ENCODE measurements at regions of chr1 and their contacts with region 1.

Region 1: DNA sequence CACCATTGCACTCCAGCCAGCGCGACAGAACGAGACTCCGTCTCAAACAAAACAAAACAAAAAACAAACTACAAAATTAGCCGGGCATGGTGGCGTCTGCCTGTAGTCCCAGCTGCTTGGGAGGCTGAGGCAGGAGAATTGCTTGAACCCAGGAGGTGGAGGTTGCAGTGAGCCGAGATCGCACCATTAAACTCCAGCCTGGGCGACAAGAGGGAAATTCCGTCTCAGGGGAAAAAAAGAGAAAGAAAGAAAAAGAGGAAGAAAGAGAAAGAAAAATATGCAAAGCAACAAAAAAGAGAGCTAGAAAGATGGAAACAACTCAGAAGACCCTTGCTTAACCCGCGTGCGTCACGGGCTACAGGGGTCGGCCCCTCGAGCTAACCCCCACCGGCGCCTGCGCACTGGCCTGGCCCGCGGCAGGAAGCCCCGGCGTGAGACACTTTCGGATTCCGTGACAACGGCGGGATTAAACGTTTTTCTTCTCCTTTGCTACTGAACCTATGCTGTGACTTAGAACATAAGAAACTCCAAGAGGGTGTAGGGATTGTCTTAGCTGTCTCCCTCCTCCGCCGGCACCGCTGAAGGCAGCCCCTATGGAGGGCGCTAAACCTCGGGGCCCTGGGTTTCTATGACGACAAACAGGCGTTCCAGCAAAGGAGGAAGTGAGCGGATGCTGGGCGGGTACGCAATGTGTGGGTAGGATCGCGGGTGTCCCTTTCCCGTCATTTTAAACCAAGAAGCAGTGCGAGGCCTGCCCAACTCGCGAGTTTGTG is at the start of gene AXDND1:
- DNase-seq: peak; percentile 76 to 86
- H3K4me3 ChIP-seq: peak within 1 kb of the TSS; percentile 63
- H3K4me1 ChIP-seq: peaks cover 14% of the 10 kb centered on the region
- H3K27me3 ChIP-seq: no peaks in the 10 kb centered on the region

Region 2: DNA sequence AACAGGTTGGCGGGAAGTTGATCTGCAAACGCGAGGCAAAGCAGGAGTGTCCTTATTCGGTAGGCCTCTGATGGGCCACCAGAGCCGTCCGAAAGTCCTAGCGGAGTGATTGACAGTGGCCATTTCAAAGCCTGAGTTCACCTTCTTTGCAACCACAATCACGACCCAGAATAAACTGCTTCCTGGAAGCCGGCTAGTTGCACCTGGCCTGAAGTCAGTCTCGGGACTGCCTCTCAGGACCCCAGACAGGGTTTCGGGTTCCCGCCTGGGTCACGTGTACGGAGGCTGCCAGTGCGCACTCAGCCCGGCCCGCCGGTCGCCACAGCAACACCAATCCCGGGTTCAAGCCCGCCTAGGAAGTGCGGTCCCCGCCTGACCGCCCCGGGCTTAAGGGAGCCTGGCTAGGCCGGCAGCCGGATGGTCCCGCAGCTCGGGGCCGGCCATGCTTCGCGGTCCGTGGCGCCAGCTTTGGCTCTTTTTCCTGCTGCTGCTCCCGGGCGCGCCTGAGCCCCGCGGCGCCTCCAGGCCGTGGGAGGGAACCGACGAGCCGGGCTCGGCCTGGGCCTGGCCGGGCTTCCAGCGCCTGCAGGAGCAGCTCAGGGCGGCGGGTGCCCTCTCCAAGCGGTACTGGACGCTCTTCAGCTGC is 283.7 kb before region 1 on chr1 and contains the start of gene TOR3A:
- in situ Hi-C with region 1: loop called (anchors 5 kb)
- DNase-seq: peak; percentile 79 to 94
- H3K4me3 ChIP-seq: peak within 1 kb of the TSS; percentile 73
- H3K4me1 ChIP-seq: peaks cover 12% of the 10 kb centered on the region
- H3K27me3 ChIP-seq: no peaks in the 10 kb centered on the region

Region 3: DNA sequence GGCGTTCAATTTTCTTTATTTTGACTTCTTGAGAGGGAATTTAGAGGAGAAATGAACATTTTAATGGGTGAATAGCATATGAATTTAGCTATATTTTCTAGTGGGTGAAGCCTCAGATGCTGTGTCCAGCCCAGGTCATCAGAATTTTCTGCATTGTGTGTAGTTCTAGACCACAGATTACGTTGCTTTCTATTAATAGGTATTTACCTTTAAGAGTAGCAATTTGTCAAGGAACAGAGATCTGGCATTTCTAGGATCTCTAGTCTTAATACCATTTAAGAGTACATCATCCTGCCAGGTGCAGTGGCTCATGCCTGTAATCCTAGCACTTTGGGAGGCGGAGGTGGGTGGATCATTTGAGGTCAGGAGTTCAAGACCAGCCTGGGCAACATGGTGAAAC is 246.9 kb after region 1 on chr1:
- in situ Hi-C with region 1: no loop called
- DNase-seq: no peak
- H3K4me3 ChIP-seq: no peak overlapping the region
- H3K4me1 ChIP-seq: no peaks in the 10 kb centered on the region
- H3K27me3 ChIP-seq: peaks cover 4% of the 10 kb centered on the region; the same call in 1 of the 2 replicates

Measured in HAP-1 (cell line).